Activated B cell treated with CpG ODN at 0.5 μM for 24 hours (primary cell): ENCODE measurements at regions of chr16 and their contacts with region 1.

Region 1: DNA sequence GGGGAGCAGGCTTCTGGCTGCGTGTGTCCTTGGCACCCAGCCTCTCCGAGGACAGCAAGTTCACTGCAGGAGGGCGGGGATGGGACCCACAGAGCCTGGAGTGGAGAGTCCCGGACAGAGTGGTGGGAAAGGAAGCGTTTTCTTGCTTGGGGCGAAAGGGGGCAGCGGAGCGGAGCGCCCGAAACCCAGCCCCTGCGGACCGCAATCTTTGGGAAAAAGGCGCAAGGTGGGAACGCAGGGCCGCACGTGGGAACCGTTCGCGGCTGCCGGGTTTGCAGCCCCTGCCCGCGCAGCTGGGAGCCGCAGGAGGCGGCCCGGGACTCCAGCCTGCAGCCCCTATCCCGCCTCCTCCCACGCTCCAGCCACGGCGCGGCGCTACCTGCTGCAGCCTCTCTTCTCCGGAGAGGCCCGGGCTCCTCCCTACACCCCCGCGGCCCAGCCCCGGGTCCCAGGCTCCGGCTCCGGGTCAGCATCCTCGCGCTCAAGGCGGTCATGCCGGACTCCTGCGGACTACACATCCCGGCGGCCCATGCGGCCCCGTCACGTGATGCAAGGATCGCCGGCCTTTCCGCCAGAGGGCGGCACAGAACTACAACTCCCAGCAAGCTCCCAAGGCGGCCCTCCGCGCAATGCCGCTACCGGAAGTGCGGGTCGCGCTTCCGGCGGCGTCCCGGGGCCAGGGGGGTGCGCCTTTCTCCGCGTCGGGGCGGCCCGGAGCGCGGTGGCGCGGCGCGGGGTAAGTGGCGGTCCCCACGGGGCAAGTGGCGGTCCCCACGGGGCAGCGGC is at the starts of genes NTHL1 and TSC2:
- DNase-seq: peak; percentile 93
- ATAC-seq: peak; percentile 95
- H3K4me3 Mint-ChIP-seq: peak within 1 kb of the TSS; percentile 89
- H3K27ac Mint-ChIP-seq: peak within 1 kb of the TSS; percentile 66
- H3K4me1 Mint-ChIP-seq: peaks cover 24% of the 10 kb centered on the region
- H3K27me3 Mint-ChIP-seq: no peaks in the 10 kb centered on the region
- CTCF ChIP-seq: no peak
- total RNA-seq, gene NTHL1: 10.5 and 11.5 TPM in 2 replicates
- total RNA-seq, gene TSC2: 130 and 139 TPM in 2 replicates

Region 2: DNA sequence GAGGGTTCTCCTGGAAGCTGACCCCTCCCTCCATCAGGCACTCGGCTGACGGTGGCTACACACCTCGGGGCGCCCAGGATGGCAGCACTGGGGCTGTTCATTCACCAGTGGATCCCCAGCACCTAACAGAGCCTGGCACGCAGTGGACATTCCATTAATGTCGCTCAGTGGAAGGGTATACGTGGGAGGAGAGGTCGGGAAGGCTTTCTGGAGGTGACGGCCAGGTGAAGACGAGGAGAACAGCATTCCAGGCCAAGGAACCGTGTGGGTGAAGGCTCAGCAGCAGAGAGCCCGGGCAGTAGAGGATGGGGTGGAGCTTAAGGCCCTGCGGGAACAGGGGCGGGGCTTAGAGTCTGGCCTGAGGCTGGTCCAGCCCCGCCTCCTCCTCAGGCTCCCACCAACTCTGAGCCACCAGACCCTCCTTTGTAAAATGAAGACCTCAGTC is 126.8 kb before region 1 on chr16:
- CTCF ChIA-PET with region 1: no interaction called
- POLR2A ChIA-PET with region 1: no interaction called
- intact Hi-C with region 1: no loop called
- DNase-seq: no peak
- ATAC-seq: peak; percentile 37
- H3K4me3 Mint-ChIP-seq: no peak overlapping the region
- H3K27ac Mint-ChIP-seq: no peak overlapping the region
- H3K4me1 Mint-ChIP-seq: peaks cover 5% of the 10 kb centered on the region
- H3K27me3 Mint-ChIP-seq: peaks cover 48% of the 10 kb centered on the region
- CTCF ChIP-seq: no peak

Region 3: GRCh38 chr16:2023098-2023925 is 24.2 kb before region 1 on chr16:
- CTCF ChIA-PET with region 1: no interaction called
- POLR2A ChIA-PET with region 1: interaction called, 13 read pairs
- intact Hi-C with region 1: loop called (anchors 1 kb)
- DNase-seq: peak; percentile 97
- ATAC-seq: peak; percentile 94
- H3K4me3 Mint-ChIP-seq: peak overlapping the region; percentile 79
- H3K27ac Mint-ChIP-seq: peak overlapping the region; percentile 73
- H3K4me1 Mint-ChIP-seq: peaks cover 24% of the 10 kb centered on the region
- H3K27me3 Mint-ChIP-seq: peaks cover 27% of the 10 kb centered on the region
- CTCF ChIP-seq: peak; percentile 82

Region 4: GRCh38 chr16:2121853-2122252 is 74.3 kb after region 1 on chr16:
- CTCF ChIA-PET with region 1: no interaction called
- POLR2A ChIA-PET with region 1: no interaction called
- intact Hi-C with region 1: loop called (anchors 5 kb)
- DNase-seq: no peak
- ATAC-seq: no peak
- H3K4me3 Mint-ChIP-seq: no peak overlapping the region
- H3K27ac Mint-ChIP-seq: no peak overlapping the region
- H3K4me1 Mint-ChIP-seq: peaks cover 15% of the 10 kb centered on the region
- H3K27me3 Mint-ChIP-seq: no peaks in the 10 kb centered on the region
- CTCF ChIP-seq: no peak

Region 5: GRCh38 chr16:2205104-2205966 is 157.8 kb after region 1 on chr16 and contains the start of gene MLST8:
- CTCF ChIA-PET with region 1: no interaction called
- POLR2A ChIA-PET with region 1: interaction called, 4 read pairs
- intact Hi-C with region 1: loop called (anchors 1 kb)
- DNase-seq: peak; percentile 99
- ATAC-seq: peak; percentile 90
- H3K4me3 Mint-ChIP-seq: peak within 1 kb of the TSS; percentile 84
- H3K27ac Mint-ChIP-seq: peak within 1 kb of the TSS; percentile 86
- H3K4me1 Mint-ChIP-seq: peaks cover 19% of the 10 kb centered on the region
- H3K27me3 Mint-ChIP-seq: no peaks in the 10 kb centered on the region
- CTCF ChIP-seq: no peak
- total RNA-seq, gene MLST8: 35.7 and 38.7 TPM in 2 replicates

Region 6: GRCh38 chr16:2340564-2341455 is 293.3 kb after region 1 on chr16 and contains the start of gene ABCA3:
- CTCF ChIA-PET with region 1: no interaction called
- POLR2A ChIA-PET with region 1: no interaction called
- intact Hi-C with region 1: no loop called
- DNase-seq: peak; percentile 99
- ATAC-seq: peak; percentile 84
- H3K4me3 Mint-ChIP-seq: peak within 1 kb of the TSS; percentile 79
- H3K27ac Mint-ChIP-seq: peak within 1 kb of the TSS; percentile 66
- H3K4me1 Mint-ChIP-seq: peaks cover 13% of the 10 kb centered on the region
- H3K27me3 Mint-ChIP-seq: no peaks in the 10 kb centered on the region
- CTCF ChIP-seq: peak; percentile 95
- total RNA-seq, gene ABCA3: 2.4 and 3.1 TPM in 2 replicates